ENCODE measurements at regions of chr3 and their contacts with region 1.

Region 1: GRCh38 chr3:113124256-113124830 is 87.0 kb upstream of the BOC start:
- DNase-seq: no peak
- ATAC-seq: no peak
- H3K4me3 ChIP-seq: no peak overlapping the region
- H3K27ac ChIP-seq: no peak overlapping the region
- H3K4me1 ChIP-seq: no peaks in the 10 kb centered on the region
- H3K27me3 ChIP-seq: peaks cover 0 to 3% of the 10 kb centered on the region in 2 experiments; a peak in 1 of 5 replicates
- CTCF ChIP-seq: no peak
- EP300 ChIP-seq: no peak
- POLR2A ChIP-seq: no peak
- RAD21 ChIP-seq: no peak

Region 2: DNA sequence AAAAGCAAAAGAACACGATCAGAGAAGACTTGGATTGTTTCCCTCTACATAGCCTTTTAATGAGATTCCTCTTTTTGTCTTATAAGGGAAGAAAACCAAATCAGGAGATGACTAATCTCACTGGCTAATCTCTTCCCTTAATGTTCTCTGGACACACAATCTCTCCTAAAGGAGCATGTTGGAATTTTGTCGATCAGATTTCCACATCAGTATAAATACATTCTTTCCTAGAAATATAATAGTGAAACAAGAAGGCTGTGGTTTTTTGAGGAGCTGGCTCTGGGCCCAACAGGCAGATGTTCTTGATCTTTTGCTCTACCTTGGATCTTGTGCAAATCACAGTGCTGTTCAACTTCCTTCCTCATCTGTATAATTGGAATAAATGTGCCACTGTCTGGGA is 39.6 kb before region 1 on chr3:
- CTCF ChIA-PET with region 1: no interaction called
- POLR2A ChIA-PET with region 1: no interaction called
- in situ Hi-C with region 1: no loop called
- intact Hi-C with region 1: no loop called
- DNase-seq: no peak
- ATAC-seq: no peak
- H3K4me3 ChIP-seq: no peak overlapping the region
- H3K27ac ChIP-seq: no peak overlapping the region
- H3K4me1 ChIP-seq: peaks cover 17% of the 10 kb centered on the region
- H3K27me3 ChIP-seq: no peaks in the 10 kb centered on the region
- CTCF ChIP-seq: no peak
- EP300 ChIP-seq: no peak
- POLR2A ChIP-seq: no peak
- RAD21 ChIP-seq: no peak

Region 3: DNA sequence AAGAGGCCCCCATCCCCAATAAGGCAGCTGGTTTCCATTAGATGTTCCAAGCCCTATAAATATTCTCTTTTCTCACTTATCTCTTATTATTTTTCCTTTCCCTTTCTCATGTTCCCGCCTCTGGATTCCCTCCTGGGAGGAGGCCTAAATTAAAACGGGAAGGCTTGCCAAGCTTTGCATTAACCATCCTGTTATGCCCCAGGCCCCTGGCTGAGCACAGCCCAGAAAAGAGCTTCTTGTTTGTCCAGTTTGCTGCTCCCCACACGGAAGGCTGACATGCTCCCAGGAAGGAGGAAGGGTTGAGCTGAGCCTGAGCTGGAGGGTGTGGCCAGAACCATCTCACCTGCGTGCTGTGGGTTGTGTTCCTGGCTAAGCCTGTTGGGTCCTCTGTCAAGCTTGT is 23.9 kb after region 1 on chr3:
- CTCF ChIA-PET with region 1: no interaction called
- POLR2A ChIA-PET with region 1: no interaction called
- in situ Hi-C with region 1: no loop called
- intact Hi-C with region 1: loop called (anchors 2 kb)
- DNase-seq: no peak
- ATAC-seq: no peak
- H3K4me3 ChIP-seq: no peak overlapping the region
- H3K27ac ChIP-seq: no peak overlapping the region
- H3K4me1 ChIP-seq: no peaks in the 10 kb centered on the region
- H3K27me3 ChIP-seq: no peaks in the 10 kb centered on the region; a peak in 1 of 5 replicates
- CTCF ChIP-seq: no peak
- EP300 ChIP-seq: no peak
- POLR2A ChIP-seq: no peak
- RAD21 ChIP-seq: no peak

Region 4: GRCh38 chr3:113166719-113167492 is 42.6 kb after region 1 on chr3:
- CTCF ChIA-PET with region 1: no interaction called
- POLR2A ChIA-PET with region 1: no interaction called
- in situ Hi-C with region 1: no loop called
- intact Hi-C with region 1: no loop called
- DNase-seq: no peak
- ATAC-seq: no peak
- H3K4me3 ChIP-seq: no peak overlapping the region
- H3K27ac ChIP-seq: no peak overlapping the region
- H3K4me1 ChIP-seq: no peaks in the 10 kb centered on the region
- H3K27me3 ChIP-seq: peaks cover 2 to 15% of the 10 kb centered on the region in 2 experiments; a peak in 4 of 5 replicates
- CTCF ChIP-seq: no peak
- EP300 ChIP-seq: no peak
- POLR2A ChIP-seq: no peak
- RAD21 ChIP-seq: no peak